ENCODE measurements at regions of chr13 and their contacts with region 1.

Region 1: GRCh38 chr13:78215458-78216108 is 297.0 kb upstream of the EDNRB start:
- DNase-seq: no peak
- H3K4me3 ChIP-seq: no peak overlapping the region
- H3K4me3 Mint-ChIP-seq: no peak overlapping the region
- H3K27ac ChIP-seq: no peak overlapping the region
- H3K27ac Mint-ChIP-seq: no peak overlapping the region
- H3K4me1 ChIP-seq: no peaks in the 10 kb centered on the region
- H3K4me1 Mint-ChIP-seq: no peaks in the 10 kb centered on the region
- H3K27me3 ChIP-seq: no peaks in the 10 kb centered on the region
- H3K27me3 Mint-ChIP-seq: no peaks in the 10 kb centered on the region

Region 2: DNA sequence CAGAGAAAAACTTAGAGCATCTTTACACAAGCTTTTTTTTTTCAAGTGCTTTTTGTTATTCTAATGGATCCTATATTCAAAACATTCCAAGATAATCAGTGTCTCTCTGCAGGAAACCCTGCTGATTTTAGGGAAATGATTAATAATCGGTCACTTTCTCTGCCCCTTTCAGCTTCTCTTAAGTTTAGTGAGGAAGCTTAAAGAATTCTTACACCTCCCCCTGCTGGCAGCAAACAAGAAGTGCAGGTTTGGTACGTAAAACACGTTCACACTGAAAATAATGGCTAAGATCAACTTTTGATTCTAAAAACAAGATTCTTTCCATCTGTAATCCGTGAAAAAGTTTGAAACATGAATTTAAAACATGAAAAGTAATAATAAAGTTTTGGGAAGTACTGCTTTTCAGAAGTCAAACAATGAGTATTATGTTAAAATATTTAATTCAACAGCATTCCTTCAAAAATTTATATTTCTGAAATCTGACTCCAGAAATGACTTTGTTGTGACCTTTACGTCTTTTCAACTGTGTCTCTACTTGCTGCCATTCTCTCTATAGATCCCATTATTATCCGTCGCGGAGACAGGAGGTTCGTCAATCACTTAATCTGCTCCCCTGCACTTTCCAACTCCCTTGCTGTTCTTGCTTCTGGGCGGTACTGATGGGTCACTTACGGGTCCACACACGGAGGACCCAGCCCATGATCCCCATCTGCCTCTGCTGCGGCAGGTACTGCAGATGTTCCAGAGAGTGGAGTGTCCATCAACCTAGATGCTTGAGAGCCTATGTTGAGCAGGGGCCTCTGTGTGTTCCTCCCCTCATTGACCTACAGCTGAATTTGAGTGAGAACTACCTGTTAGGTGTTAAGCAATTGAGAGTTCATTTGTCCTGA is 93.9 kb before region 1 on chr13:
- CTCF ChIA-PET with region 1: no interaction called
- POLR2A ChIA-PET with region 1: no interaction called
- intact Hi-C with region 1: no loop called
- DNase-seq: peak in 4 of 5 donors; percentile 36 to 44 (median 39)
- H3K4me3 ChIP-seq: no peak overlapping the region
- H3K4me3 Mint-ChIP-seq: no peak overlapping the region
- H3K27ac ChIP-seq: no peak overlapping the region
- H3K27ac Mint-ChIP-seq: peak overlapping the region in 1 of 7 donors; percentile 48
- H3K4me1 ChIP-seq: no peaks in the 10 kb centered on the region
- H3K4me1 Mint-ChIP-seq: peaks cover 0 to 5% (median 3%) of the 10 kb centered on the region in 4 donors
- H3K27me3 ChIP-seq: no peaks in the 10 kb centered on the region
- H3K27me3 Mint-ChIP-seq: peaks cover 2 to 5% of the 10 kb centered on the region in 2 donors

Region 3: DNA sequence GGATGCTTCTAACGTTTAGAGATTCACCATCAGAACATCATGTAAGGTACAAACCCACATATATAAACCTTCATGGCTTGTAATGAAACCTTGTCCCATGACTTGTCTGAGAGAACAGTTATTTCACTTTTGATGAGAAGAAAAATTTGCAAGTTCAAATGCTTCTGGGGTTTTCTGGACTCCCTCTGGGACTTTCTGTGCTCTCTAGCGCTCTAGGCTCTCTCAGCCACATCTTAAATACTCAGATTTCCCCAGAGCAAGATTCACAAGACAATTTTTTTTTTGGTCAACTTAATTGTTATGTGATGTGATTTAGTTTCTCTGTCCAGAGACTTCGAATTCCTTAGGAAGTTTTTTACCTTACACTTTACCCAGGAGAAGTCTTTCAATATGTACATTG is 14.2 kb before region 1 on chr13:
- CTCF ChIA-PET with region 1: no interaction called
- POLR2A ChIA-PET with region 1: no interaction called
- intact Hi-C with region 1: no loop called
- DNase-seq: no peak
- H3K4me3 ChIP-seq: no peak overlapping the region
- H3K4me3 Mint-ChIP-seq: no peak overlapping the region
- H3K27ac ChIP-seq: no peak overlapping the region
- H3K27ac Mint-ChIP-seq: no peak overlapping the region
- H3K4me1 ChIP-seq: no peaks in the 10 kb centered on the region
- H3K4me1 Mint-ChIP-seq: no peaks in the 10 kb centered on the region
- H3K27me3 ChIP-seq: no peaks in the 10 kb centered on the region
- H3K27me3 Mint-ChIP-seq: peaks cover 0 to 2% of the 10 kb centered on the region in 2 donors

Region 4: GRCh38 chr13:78239714-78240113 is 24.1 kb after region 1 on chr13:
- CTCF ChIA-PET with region 1: no interaction called
- POLR2A ChIA-PET with region 1: no interaction called
- intact Hi-C with region 1: loop called (anchors 1 kb)
- DNase-seq: no peak
- H3K4me3 ChIP-seq: no peak overlapping the region
- H3K4me3 Mint-ChIP-seq: no peak overlapping the region
- H3K27ac ChIP-seq: no peak overlapping the region
- H3K27ac Mint-ChIP-seq: no peak overlapping the region
- H3K4me1 ChIP-seq: no peaks in the 10 kb centered on the region
- H3K4me1 Mint-ChIP-seq: no peaks in the 10 kb centered on the region
- H3K27me3 ChIP-seq: no peaks in the 10 kb centered on the region
- H3K27me3 Mint-ChIP-seq: peaks cover 2 to 3% of the 10 kb centered on the region in 2 donors

Region 5: GRCh38 chr13:78265098-78265497 is 49.5 kb after region 1 on chr13:
- CTCF ChIA-PET with region 1: no interaction called
- POLR2A ChIA-PET with region 1: no interaction called
- intact Hi-C with region 1: no loop called
- DNase-seq: no peak
- H3K4me3 ChIP-seq: no peak overlapping the region
- H3K4me3 Mint-ChIP-seq: no peak overlapping the region
- H3K27ac ChIP-seq: no peak overlapping the region
- H3K27ac Mint-ChIP-seq: no peak overlapping the region
- H3K4me1 ChIP-seq: no peaks in the 10 kb centered on the region
- H3K4me1 Mint-ChIP-seq: no peaks in the 10 kb centered on the region
- H3K27me3 ChIP-seq: no peaks in the 10 kb centered on the region
- H3K27me3 Mint-ChIP-seq: no peaks in the 10 kb centered on the region